ENCODE measurements at regions of chr9 and their contacts with region 1.

Region 1: GRCh38 chr9:114108016-114108833 is 9.1 kb upstream of the KIF12 start:
- DNase-seq: peak; percentile 76
- H3K4me3 Mint-ChIP-seq: no peak overlapping the region
- H3K27ac Mint-ChIP-seq: no peak overlapping the region
- H3K4me1 Mint-ChIP-seq: no peaks in the 10 kb centered on the region
- H3K27me3 Mint-ChIP-seq: peaks cover 4% of the 10 kb centered on the region

Region 2: DNA sequence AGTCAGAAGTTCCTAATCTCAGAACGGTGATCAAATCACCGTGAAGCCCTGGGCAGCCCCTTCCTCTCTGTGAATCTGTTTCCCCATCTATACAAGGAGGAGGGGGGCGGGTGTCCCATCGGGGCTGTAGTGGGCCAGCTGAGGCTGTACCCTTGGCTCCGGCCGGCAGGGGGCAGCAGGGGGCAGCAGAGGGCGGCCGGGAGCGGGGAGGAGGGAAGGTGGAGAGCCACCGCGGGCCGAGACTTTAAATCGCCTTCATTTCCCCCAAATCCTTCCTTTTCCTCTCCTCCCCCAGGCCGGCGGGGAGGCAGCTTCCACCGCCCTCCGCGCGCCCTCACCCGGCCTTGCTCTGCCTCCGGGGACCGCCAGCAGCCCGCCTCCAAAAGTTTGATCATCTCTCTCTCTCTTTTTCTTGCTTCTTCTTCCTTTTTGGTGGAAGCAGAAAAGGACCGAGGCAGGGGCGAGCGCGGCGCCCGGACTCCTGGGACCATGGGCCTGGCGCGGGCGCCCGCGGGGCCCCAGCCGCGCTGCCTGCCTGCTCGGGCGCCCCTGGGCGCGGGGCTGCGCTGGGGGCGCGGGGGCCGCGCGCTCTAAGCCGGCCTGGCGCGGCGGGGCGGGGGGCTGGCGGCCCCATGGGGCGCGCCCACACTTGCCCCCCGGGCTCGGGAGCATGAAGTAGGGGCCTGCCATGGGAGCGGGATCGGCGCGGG is 47.2 kb after region 1 on chr9 and contains the start of gene COL27A1:
- CTCF ChIA-PET with region 1: interaction called, 10 read pairs
- POLR2A ChIA-PET with region 1: no interaction called
- intact Hi-C with region 1: loop called (anchors 5 kb)
- DNase-seq: peak; percentile 88
- H3K4me3 Mint-ChIP-seq: peak within 1 kb of the TSS; percentile 81
- H3K27ac Mint-ChIP-seq: peak within 1 kb of the TSS; percentile 50
- H3K4me1 Mint-ChIP-seq: peaks cover 18% of the 10 kb centered on the region
- H3K27me3 Mint-ChIP-seq: peaks cover 31% of the 10 kb centered on the region
- total RNA-seq, gene COL27A1: 4.0 to 4.1 TPM

Region 3: GRCh38 chr9:114177423-114178064 is 69.3 kb after region 1 on chr9:
- CTCF ChIA-PET with region 1: no interaction called
- POLR2A ChIA-PET with region 1: no interaction called
- intact Hi-C with region 1: no loop called
- DNase-seq: no peak
- H3K4me3 Mint-ChIP-seq: no peak overlapping the region
- H3K27ac Mint-ChIP-seq: no peak overlapping the region
- H3K4me1 Mint-ChIP-seq: no peaks in the 10 kb centered on the region
- H3K27me3 Mint-ChIP-seq: no peaks in the 10 kb centered on the region

Region 4: DNA sequence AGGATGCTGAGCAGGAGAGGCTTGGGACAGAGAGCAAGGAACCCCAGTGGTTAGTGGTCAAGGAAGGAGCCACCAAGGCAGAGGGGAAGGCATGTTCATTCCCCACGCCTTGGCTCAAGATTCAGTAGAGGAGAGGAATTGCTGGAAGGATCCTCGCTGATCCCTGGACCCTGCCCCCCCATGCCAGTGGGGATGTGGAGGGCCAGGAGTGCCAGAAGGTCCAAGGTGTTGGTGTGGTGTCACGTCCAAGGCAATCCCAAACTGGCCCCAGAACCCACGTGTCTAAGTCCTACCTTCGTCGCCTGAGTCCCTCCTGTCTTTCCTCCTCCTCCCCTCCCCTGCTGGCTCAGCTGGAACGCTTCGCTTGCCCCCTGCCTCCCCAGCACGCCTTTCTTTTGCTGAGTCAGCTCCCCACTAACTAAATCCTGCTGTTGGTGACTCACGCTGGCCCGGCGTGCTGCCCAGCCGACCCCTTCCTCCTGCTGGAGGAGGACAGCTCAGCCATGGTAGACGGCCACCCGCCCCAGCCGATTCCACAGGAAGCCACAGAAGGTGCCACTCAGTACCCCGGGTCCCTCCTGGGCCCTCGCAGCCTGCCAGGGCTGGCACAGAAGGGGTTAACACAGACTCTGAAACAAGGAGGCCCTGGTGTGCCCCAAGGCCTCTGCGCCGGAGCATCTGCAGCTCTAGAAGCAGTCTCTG is 177.1 kb after region 1 on chr9:
- CTCF ChIA-PET with region 1: interaction called, 93 read pairs
- POLR2A ChIA-PET with region 1: no interaction called
- intact Hi-C with region 1: no loop called
- DNase-seq: no peak
- H3K4me3 Mint-ChIP-seq: no peak overlapping the region
- H3K27ac Mint-ChIP-seq: no peak overlapping the region
- H3K4me1 Mint-ChIP-seq: no peaks in the 10 kb centered on the region
- H3K27me3 Mint-ChIP-seq: no peaks in the 10 kb centered on the region

Region 5: DNA sequence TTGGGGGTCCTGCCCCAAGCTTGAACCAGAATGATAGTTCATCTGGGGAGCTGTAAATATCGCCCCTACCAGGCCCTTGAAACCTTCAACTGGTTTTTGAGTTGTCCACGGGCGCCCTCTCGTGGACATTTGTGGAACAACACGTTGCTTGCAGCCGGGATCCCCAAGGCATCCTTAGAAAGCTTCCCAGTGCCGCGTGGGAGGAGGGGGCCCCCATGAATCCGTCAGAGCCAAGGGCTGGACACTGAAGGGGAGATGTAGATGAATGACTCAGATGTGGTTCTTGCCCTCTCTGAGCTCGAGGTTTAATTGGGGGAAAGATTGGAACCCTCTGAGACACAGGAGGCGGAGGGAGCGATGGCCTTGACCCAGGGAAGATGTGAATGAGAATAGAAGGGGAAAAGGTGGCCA is 182.8 kb after region 1 on chr9:
- CTCF ChIA-PET with region 1: interaction called, 93 read pairs
- POLR2A ChIA-PET with region 1: no interaction called
- intact Hi-C with region 1: loop called (anchors 1 kb)
- DNase-seq: peak; percentile 81
- H3K4me3 Mint-ChIP-seq: no peak overlapping the region
- H3K27ac Mint-ChIP-seq: no peak overlapping the region
- H3K4me1 Mint-ChIP-seq: peaks cover 2% of the 10 kb centered on the region
- H3K27me3 Mint-ChIP-seq: peaks cover 3% of the 10 kb centered on the region